ENCODE measurements at regions of chr3 and their contacts with region 1.

Region 1: DNA sequence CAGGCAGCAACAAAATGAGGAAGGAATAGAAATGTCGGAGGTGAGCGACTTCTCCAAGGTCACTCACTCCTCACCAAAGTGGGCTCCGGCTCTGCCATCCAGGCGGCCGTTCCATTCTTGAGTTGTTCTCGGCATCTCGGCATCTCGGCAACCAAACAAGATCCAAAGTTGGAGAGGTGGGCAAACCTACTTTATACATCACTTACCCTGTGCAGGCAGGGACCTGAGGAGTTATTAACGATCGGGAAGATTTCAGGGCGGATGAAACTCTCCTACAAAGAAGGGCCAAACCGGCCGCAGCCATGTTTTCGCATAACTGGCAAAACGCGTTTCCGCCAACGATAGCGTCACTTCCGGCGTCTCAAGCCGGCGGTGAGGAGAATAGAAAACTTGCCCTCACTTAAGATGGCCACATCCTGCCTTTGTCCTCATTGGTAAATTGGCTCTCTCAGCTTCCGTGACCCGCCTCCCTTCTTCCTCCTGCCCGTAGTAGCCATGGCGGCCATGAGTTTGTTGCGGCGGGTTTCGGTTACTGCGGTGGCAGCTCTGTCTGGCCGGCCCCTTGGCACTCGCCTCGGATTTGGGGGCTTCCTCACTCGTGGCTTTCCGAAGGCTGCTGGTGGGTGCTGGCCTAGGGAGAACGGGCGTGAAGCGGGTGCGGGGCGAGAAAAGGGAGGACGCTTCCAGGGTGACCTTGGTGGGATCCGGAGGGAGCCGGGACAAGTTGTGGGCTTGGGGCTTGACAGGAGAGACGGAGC is at the starts of genes MRPL47 and NDUFB5:
- DNase-seq: peak; percentile 91
- H3K4me3 Mint-ChIP-seq: peak within 1 kb of the TSS; percentile 99
- H3K27ac Mint-ChIP-seq: peak within 1 kb of the TSS; percentile 99
- H3K4me1 Mint-ChIP-seq: peaks cover 31% of the 10 kb centered on the region
- H3K27me3 Mint-ChIP-seq: no peaks in the 10 kb centered on the region
- total RNA-seq, gene MRPL47: 61.2 and 64.4 TPM in 2 replicates
- total RNA-seq, gene NDUFB5: 90.3 and 91.6 TPM in 2 replicates

Region 2: GRCh38 chr3:179391906-179392305 is 212.6 kb before region 1 on chr3:
- intact Hi-C with region 1: no loop called
- DNase-seq: no peak
- H3K4me3 Mint-ChIP-seq: no peak overlapping the region
- H3K27ac Mint-ChIP-seq: no peak overlapping the region
- H3K4me1 Mint-ChIP-seq: no peaks in the 10 kb centered on the region
- H3K27me3 Mint-ChIP-seq: no peaks in the 10 kb centered on the region

Region 3: GRCh38 chr3:179642871-179643270 is 38.4 kb after region 1 on chr3:
- intact Hi-C with region 1: loop called (anchors 1 kb)
- DNase-seq: no peak
- H3K4me3 Mint-ChIP-seq: no peak overlapping the region
- H3K27ac Mint-ChIP-seq: no peak overlapping the region
- H3K4me1 Mint-ChIP-seq: peaks cover 8% of the 10 kb centered on the region
- H3K27me3 Mint-ChIP-seq: peaks cover 6% of the 10 kb centered on the region